CD8-positive, alpha-beta T cell (primary cell): ENCODE measurements at regions of chr7 and their contacts with region 1.

Region 1: DNA sequence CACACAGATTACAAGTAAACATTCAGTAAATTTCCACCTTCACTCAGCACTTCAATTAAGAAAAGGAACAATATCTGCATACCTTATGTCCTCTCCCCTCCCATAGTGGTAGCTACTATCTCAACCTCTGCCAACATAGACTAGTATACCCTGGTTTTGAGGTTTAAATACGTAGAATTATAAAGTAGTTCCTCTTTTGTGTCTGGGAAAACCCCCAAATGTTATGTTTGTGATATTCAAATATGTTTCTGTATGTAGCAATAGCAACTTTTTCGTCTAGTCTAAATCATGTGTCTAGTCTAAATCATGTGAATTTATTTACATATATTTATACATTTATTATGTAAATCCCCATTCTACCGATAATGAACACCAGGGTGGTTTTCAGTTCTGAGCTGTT is 13.2 kb upstream of the CAMK2B start:
- DNase-seq: peak in 1 of 9 experiments; percentile 15
- ATAC-seq: peak; percentile 26
- H3K4me3 ChIP-seq: no peak overlapping the region
- H3K4me3 Mint-ChIP-seq: no peak overlapping the region
- H3K27ac ChIP-seq: no peak overlapping the region
- H3K27ac Mint-ChIP-seq: no peak overlapping the region
- H3K4me1 ChIP-seq: no peaks in the 10 kb centered on the region
- H3K4me1 Mint-ChIP-seq: no peaks in the 10 kb centered on the region
- H3K27me3 ChIP-seq: no peaks in the 10 kb centered on the region
- H3K27me3 Mint-ChIP-seq: no peaks in the 10 kb centered on the region
- CTCF ChIP-seq: no peak

Region 2: DNA sequence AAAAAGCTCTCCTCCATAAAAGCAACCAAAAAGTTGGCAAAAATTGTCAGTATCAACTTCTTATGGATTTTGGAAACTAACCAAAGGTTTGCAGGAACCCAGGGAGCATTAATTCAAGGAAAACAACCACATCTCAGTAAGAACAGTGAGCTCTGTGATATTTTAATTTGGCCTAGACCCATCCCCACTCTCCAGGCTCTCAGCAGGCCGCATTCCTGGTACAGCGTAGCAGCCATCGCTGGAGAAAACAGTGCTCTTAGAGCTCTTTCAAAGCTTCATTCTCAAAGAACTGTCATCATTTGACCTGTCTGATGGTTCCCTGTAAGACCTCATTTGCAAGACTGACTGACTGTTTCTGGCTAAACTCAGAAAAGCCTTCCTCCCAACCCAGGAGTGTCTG is 70.0 kb after region 1 on chr7:
- CTCF ChIA-PET with region 1: no interaction called
- POLR2A ChIA-PET with region 1: no interaction called
- intact Hi-C with region 1: loop called in 1 of 2 experiments (anchors 5 kb)
- DNase-seq: no peak
- ATAC-seq: no peak
- H3K4me3 ChIP-seq: no peak overlapping the region
- H3K4me3 Mint-ChIP-seq: no peak overlapping the region
- H3K27ac ChIP-seq: no peak overlapping the region
- H3K27ac Mint-ChIP-seq: peak overlapping the region; percentile 49
- H3K4me1 ChIP-seq: no peaks in the 10 kb centered on the region
- H3K4me1 Mint-ChIP-seq: peaks cover 26% of the 10 kb centered on the region
- H3K27me3 ChIP-seq: no peaks in the 10 kb centered on the region
- H3K27me3 Mint-ChIP-seq: no peaks in the 10 kb centered on the region
- CTCF ChIP-seq: no peak